SK-N-SH (cell line): ENCODE measurements at regions of chr22 and their contacts with region 1.

Region 1: GRCh38 chr22:40645579-40646197 is 9.2 kb upstream of the MRTFA start:
- DNase-seq: no peak
- H3K4me3 ChIP-seq: no peak overlapping the region
- H3K27ac ChIP-seq: peak overlapping the region in 1 of 2 experiments; percentile 47; a peak in 1 of 4 replicates
- H3K4me1 ChIP-seq: no peaks in the 10 kb centered on the region
- H3K27me3 ChIP-seq: no peaks in the 10 kb centered on the region
- CTCF ChIP-seq: no peak
- EP300 ChIP-seq: no peak
- RAD21 ChIP-seq: no peak

Region 2: GRCh38 chr22:40533712-40534378 is 111.8 kb before region 1 on chr22:
- CTCF ChIA-PET with region 1: interaction called, 12 read pairs
- POLR2A ChIA-PET with region 1: no interaction called
- DNase-seq: no peak
- H3K4me3 ChIP-seq: peak overlapping the region; percentile 35 to 51; a peak in 2 of 4 replicates
- H3K27ac ChIP-seq: peak overlapping the region; percentile 55 to 97; a peak in 3 of 4 replicates
- H3K4me1 ChIP-seq: peaks cover 9 to 14% of the 10 kb centered on the region in 2 experiments; a peak in 3 of 4 replicates
- H3K27me3 ChIP-seq: no peaks in the 10 kb centered on the region
- CTCF ChIP-seq: no peak
- EP300 ChIP-seq: no peak
- RAD21 ChIP-seq: no peak

Region 3: GRCh38 chr22:40618400-40618799 is 27.3 kb before region 1 on chr22:
- CTCF ChIA-PET with region 1: no interaction called
- POLR2A ChIA-PET with region 1: no interaction called
- DNase-seq: no peak
- H3K4me3 ChIP-seq: no peak overlapping the region
- H3K27ac ChIP-seq: no peak overlapping the region
- H3K4me1 ChIP-seq: no peaks in the 10 kb centered on the region
- H3K27me3 ChIP-seq: no peaks in the 10 kb centered on the region
- CTCF ChIP-seq: no peak
- EP300 ChIP-seq: no peak
- RAD21 ChIP-seq: no peak

Region 4: DNA sequence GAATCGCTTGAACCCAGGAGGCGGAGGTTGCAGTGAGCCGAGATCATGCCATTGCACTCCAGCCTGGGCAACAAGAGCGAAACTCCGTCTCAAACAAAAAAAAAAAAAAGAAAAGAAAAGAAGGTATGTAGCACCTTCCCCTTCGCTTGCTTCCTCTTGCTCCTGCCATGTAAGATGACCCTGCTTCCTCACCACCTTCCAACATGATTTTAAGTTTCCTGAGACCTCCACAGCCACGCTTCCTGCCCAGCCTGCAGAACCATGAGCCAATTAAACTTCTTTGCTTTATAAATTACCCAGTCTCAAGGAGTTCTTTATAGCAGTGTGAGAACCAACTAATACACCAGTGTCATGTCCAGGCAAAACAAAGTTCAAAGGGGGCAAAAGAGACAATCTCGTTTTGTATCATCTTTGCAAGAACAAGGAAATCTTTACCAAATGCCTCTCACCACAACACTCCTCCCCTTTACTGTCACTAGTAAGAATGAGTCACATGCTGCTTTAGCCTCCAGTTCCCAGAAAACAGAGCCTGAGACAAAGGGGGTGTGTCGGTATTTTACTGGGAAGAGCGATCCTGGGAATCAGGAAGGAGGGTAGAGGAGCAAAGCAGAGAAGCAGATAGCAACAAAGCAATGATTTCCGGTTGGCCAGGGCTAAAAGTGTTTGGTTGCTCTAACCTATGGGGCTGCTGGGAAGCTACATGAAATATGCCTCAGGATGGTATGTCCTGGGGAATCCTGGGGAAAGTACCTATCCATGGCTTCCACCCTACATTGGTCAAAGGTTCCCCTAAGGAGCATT is 23.1 kb after region 1 on chr22:
- CTCF ChIA-PET with region 1: no interaction called
- POLR2A ChIA-PET with region 1: no interaction called
- DNase-seq: no peak
- H3K4me3 ChIP-seq: no peak overlapping the region
- H3K27ac ChIP-seq: no peak overlapping the region
- H3K4me1 ChIP-seq: no peaks in the 10 kb centered on the region; a peak in 1 of 4 replicates
- H3K27me3 ChIP-seq: no peaks in the 10 kb centered on the region
- CTCF ChIP-seq: no peak
- EP300 ChIP-seq: no peak
- RAD21 ChIP-seq: no peak